ENCODE measurements at regions of chr19 and their contacts with region 1.

Region 1: GRCh38 chr19:11482384-11483050 is 1.7 kb upstream of the ELAVL3 start:
- DNase-seq: peak; percentile 75 to 95 (median 83)
- ATAC-seq: peak; percentile 74
- H3K4me3 ChIP-seq: peak overlapping the region; percentile 17 to 27
- H3K4me3 Mint-ChIP-seq: peak overlapping the region; percentile 60
- H3K27ac ChIP-seq: no peak overlapping the region
- H3K27ac Mint-ChIP-seq: no peak overlapping the region
- H3K4me1 ChIP-seq: peaks cover 22% of the 10 kb centered on the region
- H3K4me1 Mint-ChIP-seq: peaks cover 22% of the 10 kb centered on the region
- H3K27me3 ChIP-seq: peaks cover 18 to 26% of the 10 kb centered on the region in 2 experiments
- H3K27me3 Mint-ChIP-seq: peaks cover 28% of the 10 kb centered on the region
- CTCF ChIP-seq: peak; percentile 88

Region 2: GRCh38 chr19:11242864-11243797 is 239.4 kb before region 1 on chr19:
- CTCF ChIA-PET with region 1: interaction called, 16 read pairs
- POLR2A ChIA-PET with region 1: no interaction called
- intact Hi-C with region 1: loop called in 1 of 2 experiments (anchors 1 kb)
- DNase-seq: peak; percentile 64 to 86 (median 81)
- ATAC-seq: peak; percentile 100
- H3K4me3 ChIP-seq: no peak overlapping the region
- H3K4me3 Mint-ChIP-seq: no peak overlapping the region
- H3K27ac ChIP-seq: no peak overlapping the region
- H3K27ac Mint-ChIP-seq: no peak overlapping the region
- H3K4me1 ChIP-seq: no peaks in the 10 kb centered on the region
- H3K4me1 Mint-ChIP-seq: peaks cover 5% of the 10 kb centered on the region
- H3K27me3 ChIP-seq: peaks cover 0 to 6% of the 10 kb centered on the region in 2 experiments
- H3K27me3 Mint-ChIP-seq: peaks cover 29% of the 10 kb centered on the region
- CTCF ChIP-seq: peak; percentile 56

Region 3: DNA sequence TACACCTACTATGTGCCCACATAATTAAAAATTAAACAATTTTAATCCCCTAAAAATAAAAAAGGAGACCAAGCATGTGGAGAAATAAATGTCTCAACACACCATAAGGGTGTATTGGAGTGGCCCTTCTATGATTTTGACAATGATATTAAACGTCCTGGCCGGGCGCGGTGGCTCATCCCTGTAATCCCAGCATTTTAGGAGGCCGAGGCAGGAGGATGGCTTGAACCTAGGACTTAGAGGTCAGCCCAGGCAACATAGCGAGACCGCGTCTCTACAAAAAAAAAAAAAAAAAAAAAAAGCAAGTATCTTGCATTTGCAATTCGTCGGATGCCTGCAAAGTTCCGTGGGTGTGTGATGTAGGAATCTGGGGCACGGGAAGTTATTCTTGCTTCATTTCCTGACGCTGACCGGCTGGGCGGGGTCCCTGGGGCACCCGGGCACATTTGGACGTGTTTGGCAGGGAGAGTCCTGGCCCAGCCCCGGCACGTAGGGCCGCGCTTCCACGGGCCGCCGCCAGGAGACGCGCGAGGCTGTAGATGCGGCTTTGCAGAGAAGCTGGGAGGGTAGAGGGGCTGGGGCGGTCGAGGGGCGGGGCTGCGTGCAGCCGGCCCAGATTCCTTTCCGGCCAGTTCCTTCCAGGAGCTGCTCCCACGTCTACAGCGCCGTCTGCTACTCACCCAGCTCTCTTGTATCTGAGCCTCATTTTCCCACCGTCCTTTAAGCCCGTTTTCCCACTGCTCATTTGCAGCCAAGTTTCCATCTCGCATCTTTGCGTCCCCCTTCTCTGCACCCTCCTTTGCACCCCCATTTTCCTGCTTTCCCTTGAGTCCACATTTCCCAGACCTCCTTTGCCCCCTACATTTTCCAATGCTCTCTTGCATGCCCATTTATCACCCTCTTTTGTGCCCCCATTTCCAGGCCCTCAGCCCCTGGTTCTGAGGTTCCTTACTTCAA is 188.8 kb before region 1 on chr19:
- CTCF ChIA-PET with region 1: interaction called, 21 read pairs
- POLR2A ChIA-PET with region 1: interaction called, 6 read pairs
- intact Hi-C with region 1: loop called (anchors 1 kb)
- DNase-seq: peak; percentile 68 to 84 (median 76)
- ATAC-seq: peak; percentile 99
- H3K4me3 ChIP-seq: no peak overlapping the region
- H3K4me3 Mint-ChIP-seq: no peak overlapping the region
- H3K27ac ChIP-seq: no peak overlapping the region
- H3K27ac Mint-ChIP-seq: no peak overlapping the region
- H3K4me1 ChIP-seq: peaks cover 8% of the 10 kb centered on the region
- H3K4me1 Mint-ChIP-seq: peaks cover 4% of the 10 kb centered on the region
- H3K27me3 ChIP-seq: peaks cover 0 to 12% of the 10 kb centered on the region in 2 experiments
- H3K27me3 Mint-ChIP-seq: peaks cover 24% of the 10 kb centered on the region
- CTCF ChIP-seq: peak; percentile 90

Region 4: DNA sequence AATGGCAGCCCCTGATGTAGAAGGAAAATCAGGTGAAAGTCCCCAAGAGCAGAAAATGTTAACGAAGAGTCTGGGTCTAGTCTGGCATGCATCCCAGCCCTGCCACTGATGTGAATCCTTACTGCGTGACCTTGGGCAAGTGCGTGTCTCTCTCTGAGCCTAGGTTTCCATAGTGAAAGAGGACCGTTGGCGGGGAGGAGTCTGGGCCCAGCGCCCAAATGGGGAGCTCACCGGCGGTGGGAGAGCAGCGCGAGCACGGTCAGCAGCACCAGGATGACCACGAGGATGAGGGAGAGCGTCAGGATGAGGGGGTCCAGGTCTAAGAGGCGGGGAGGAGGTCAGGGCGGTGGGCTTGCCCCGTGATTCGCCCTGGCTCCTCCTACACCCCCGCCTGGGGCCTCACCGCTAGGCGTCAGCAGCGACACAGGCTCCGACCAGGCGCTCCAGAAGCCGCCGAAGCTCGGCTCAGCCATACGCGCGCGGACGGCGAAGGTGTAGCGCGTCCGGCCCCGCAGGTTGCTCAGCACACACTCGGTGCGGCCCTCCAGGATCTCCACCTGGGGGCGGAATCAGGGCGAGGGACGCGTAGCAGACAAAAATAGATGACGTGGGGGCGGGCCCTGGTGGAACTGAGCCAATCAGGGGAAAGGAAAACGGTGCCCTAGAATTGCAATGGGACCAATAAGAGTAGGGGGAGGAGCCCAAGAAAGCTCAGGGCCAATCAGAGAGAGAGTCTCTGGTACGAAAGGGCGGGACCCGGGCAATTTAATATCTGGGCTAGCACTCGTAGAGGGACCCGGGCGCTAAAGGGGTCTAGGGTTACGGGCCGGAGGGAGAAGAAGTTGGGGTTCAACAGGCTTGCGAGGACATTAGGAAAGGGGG is 101.6 kb before region 1 on chr19:
- CTCF ChIA-PET with region 1: interaction called, 24 read pairs
- POLR2A ChIA-PET with region 1: interaction called, 11 read pairs
- intact Hi-C with region 1: loop called (anchors 1 kb)
- DNase-seq: peak; percentile 93 to 99 (median 96)
- ATAC-seq: peak; percentile 83
- H3K4me3 ChIP-seq: peak overlapping the region; percentile 64 to 72
- H3K4me3 Mint-ChIP-seq: peak overlapping the region; percentile 94
- H3K27ac ChIP-seq: peak overlapping the region; percentile 80 to 89
- H3K27ac Mint-ChIP-seq: peak overlapping the region; percentile 99
- H3K4me1 ChIP-seq: peaks cover 47% of the 10 kb centered on the region
- H3K4me1 Mint-ChIP-seq: peaks cover 45% of the 10 kb centered on the region
- H3K27me3 ChIP-seq: peaks cover 6 to 23% of the 10 kb centered on the region in 2 experiments
- H3K27me3 Mint-ChIP-seq: peaks cover 19% of the 10 kb centered on the region
- CTCF ChIP-seq: peak; percentile 88

Region 5: DNA sequence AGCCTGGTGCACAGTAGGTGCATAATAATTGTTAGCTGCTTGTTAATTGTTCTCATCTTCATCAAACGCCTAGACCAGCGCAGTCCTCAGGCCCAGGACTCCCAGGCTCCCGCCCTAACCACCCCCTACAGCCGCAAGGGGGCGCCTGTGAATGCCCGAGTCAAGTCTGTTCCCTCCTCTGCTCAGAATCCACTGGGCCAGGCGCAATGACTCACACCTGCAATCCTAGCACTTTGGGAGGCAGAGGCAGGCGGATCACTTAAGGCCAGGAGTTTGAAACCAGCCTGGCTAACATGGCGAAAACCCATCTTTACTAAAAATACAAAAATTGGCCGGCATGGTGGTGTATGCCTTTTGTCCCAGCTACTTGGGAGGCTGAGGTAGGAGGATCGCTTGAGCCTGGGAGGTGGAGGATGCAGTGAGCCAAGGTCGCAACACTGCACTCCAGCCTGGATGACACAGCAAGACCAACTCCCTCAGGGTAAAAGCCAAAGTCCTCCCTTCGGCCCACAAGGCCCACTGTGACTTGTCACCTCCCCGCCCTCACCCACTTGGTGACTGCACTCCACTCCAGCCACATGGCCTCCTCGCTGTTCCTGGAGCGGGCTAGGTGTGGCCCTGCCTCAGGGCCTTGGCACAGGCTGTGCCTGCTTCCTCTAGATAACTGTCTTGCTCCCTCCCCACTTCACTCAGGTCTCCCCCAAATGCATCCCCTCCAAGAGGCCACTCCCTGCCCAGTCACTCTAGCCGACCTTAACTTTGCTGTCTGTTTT is 14.1 kb after region 1 on chr19:
- CTCF ChIA-PET with region 1: interaction called, 12 read pairs
- POLR2A ChIA-PET with region 1: interaction called, 3 read pairs
- intact Hi-C with region 1: no loop called
- DNase-seq: peak; percentile 18 to 70 (median 61)
- ATAC-seq: peak; percentile 69
- H3K4me3 ChIP-seq: no peak overlapping the region
- H3K4me3 Mint-ChIP-seq: no peak overlapping the region
- H3K27ac ChIP-seq: no peak overlapping the region
- H3K27ac Mint-ChIP-seq: no peak overlapping the region
- H3K4me1 ChIP-seq: no peaks in the 10 kb centered on the region
- H3K4me1 Mint-ChIP-seq: no peaks in the 10 kb centered on the region
- H3K27me3 ChIP-seq: no peaks in the 10 kb centered on the region
- H3K27me3 Mint-ChIP-seq: no peaks in the 10 kb centered on the region
- CTCF ChIP-seq: peak; percentile 63

Region 6: DNA sequence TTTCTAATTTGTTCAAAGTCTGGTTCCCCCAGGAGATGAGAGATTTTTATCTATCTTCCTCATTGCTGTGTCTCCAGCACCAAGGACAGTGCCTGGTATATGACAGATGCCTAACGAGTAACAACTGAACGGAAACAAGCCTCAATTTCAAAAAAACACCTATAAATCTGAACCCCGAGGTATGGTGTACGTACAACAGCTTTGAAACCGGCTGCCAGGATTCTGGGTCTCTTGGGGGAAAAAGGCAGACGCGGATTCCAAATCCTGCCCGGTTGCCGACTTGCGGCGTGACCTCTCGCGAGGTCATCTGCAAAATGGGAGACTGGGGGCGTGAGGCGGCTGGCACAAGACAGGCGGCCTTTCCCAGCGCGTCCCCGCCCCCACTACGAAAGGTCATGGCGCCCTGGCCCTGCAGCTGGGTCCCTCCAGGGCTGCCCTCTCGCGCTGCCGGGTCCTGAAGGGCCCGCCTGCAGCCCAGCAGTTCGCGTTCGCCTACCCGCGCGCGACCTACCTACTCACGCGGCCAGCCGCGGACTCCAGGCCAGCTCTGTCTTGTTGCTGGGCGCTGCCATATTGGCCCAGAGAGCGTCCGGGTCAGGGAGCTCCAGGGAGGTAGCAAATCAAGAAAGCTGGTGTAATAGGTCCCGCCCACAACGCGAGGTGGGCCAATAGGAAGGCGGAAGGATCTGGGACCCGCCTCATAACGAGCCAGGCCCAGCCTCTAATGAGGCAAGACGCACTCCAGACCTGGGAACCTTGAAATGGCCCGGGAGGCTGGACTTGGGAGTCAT is 46.2 kb after region 1 on chr19 and contains the start of gene ECSIT:
- CTCF ChIA-PET with region 1: no interaction called
- POLR2A ChIA-PET with region 1: interaction called, 3 read pairs
- intact Hi-C with region 1: loop called in 1 of 2 experiments (anchors 2 kb)
- DNase-seq: peak; percentile 83 to 96 (median 91)
- ATAC-seq: peak; percentile 98
- H3K4me3 ChIP-seq: peak within 1 kb of the TSS; percentile 85 to 92
- H3K4me3 Mint-ChIP-seq: peak within 1 kb of the TSS; percentile 97
- H3K27ac ChIP-seq: peak within 1 kb of the TSS; percentile 62 to 89
- H3K27ac Mint-ChIP-seq: peak within 1 kb of the TSS; percentile 96
- H3K4me1 ChIP-seq: peaks cover 19% of the 10 kb centered on the region
- H3K4me1 Mint-ChIP-seq: peaks cover 16% of the 10 kb centered on the region
- H3K27me3 ChIP-seq: no peaks in the 10 kb centered on the region
- H3K27me3 Mint-ChIP-seq: no peaks in the 10 kb centered on the region
- CTCF ChIP-seq: no peak
- total RNA-seq, gene ECSIT: 31.1 to 32.4 TPM

Region 7: GRCh38 chr19:12656899-12657571 is 1174.5 kb after region 1 on chr19:
- CTCF ChIA-PET with region 1: no interaction called
- POLR2A ChIA-PET with region 1: no interaction called
- intact Hi-C with region 1: no loop called
- DNase-seq: no peak
- ATAC-seq: no peak
- H3K4me3 ChIP-seq: no peak overlapping the region
- H3K4me3 Mint-ChIP-seq: no peak overlapping the region
- H3K27ac ChIP-seq: no peak overlapping the region
- H3K27ac Mint-ChIP-seq: no peak overlapping the region
- H3K4me1 ChIP-seq: no peaks in the 10 kb centered on the region
- H3K4me1 Mint-ChIP-seq: peaks cover 3% of the 10 kb centered on the region
- H3K27me3 ChIP-seq: no peaks in the 10 kb centered on the region
- H3K27me3 Mint-ChIP-seq: no peaks in the 10 kb centered on the region
- CTCF ChIP-seq: no peak

Measured in CD8-positive, alpha-beta T cell (primary cell).